Heart right ventricle (tissue), 16 donors: ENCODE measurements at regions of chrX and their contacts with region 1.

Region 1: GRCh38 chrX:12269484-12269883 is 131.2 kb downstream of the FRMPD4 start:
- DNase-seq: no peak
- ATAC-seq: no peak
- H3K4me3 ChIP-seq: no peak overlapping the region
- H3K27ac ChIP-seq: no peak overlapping the region
- H3K4me1 ChIP-seq: no peaks in the 10 kb centered on the region
- H3K27me3 ChIP-seq: no peaks in the 10 kb centered on the region
- CTCF ChIP-seq: no peak

Region 2: DNA sequence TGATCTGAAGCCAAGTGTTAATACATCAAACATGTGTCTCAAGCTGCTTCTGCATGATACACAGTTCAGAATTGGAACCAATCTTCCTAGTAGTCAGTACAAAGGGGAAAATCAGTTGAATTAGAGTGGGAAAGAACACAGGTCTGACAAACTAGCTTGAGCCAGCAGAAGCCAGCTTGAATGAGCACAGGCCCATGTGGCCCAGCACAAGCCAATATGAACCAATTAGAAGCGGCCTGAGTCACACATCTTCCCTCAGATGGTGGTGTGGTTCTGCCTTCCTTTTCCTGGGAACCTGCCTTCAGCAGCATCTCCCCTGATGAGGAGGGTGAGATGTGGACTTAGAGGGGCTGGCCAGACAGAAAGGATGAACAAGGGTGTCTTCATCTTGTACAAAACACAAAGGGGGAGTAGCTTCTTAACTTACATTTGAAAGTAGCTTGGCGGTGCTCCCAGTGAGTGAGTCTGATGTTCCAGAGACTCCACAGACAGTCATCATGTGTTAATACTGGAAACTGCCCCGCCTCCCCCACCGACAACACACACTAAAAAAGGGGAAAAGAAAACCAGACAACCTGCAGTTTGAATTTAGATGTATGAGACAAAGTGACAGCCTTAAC is 59.2 kb before region 1 on chrX:
- intact Hi-C with region 1: loop called in 1 of 10 experiments (anchors 5 kb)
- DNase-seq: peak in 1 of 2 donors; percentile 5
- ATAC-seq: peak in 2 of 8 donors; percentile 31 to 33
- H3K4me3 ChIP-seq: no peak overlapping the region
- H3K27ac ChIP-seq: no peak overlapping the region
- H3K4me1 ChIP-seq: no peaks in the 10 kb centered on the region
- H3K27me3 ChIP-seq: no peaks in the 10 kb centered on the region
- CTCF ChIP-seq: no peak